ENCODE measurements at regions of chr21 and their contacts with region 1.

Region 1: DNA sequence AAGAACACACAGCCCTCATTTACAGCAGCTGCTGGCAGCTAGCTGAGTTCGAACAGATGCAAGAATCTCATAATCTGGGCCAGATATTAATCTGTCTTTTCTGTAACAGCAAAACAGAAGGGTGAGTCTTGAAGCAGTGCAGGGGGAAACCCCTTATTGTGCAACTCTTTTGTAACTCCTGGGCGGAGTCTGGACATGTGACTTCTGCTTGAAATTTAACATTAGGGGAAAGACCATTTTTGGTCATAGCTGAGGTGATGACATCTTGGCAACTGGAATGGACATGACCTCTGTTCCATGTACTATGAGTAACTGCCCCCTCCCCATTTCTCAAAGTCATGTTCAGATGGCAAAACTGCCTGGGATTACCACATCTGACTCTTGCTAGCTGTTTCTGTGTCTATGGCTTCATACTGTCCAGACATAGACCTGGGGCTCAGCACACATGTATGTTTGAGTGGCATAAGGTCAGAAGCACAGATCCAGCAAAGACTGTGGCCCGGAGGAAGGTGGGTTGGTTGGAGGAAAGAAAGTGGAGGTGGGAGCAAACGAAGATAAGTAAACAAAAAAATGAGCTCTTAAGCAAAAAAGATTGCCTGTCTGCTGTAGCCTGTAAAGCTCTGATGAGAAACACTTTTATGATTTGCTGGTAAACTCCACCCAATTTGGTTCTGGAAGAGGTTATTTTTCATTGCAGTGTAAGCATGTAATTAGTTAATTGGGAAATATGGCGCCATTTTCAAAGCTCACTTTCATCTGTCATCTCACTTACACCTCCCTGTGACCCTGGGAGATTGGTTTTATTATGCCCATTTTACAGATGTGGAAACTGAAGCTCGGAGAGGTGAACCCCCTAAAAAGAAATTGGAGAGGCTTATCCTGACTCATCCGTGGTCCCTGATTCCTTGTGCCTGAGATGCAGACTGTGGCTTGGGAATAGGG is 26.1 kb downstream of the ETS2 start:
- DNase-seq: peak; percentile 98
- H3K4me3 ChIP-seq: no peak overlapping the region
- H3K27ac ChIP-seq: peak overlapping the region; percentile 63
- H3K4me1 ChIP-seq: peaks cover 13% of the 10 kb centered on the region
- H3K27me3 ChIP-seq: no peaks in the 10 kb centered on the region
- CTCF ChIP-seq: no peak

Region 2: DNA sequence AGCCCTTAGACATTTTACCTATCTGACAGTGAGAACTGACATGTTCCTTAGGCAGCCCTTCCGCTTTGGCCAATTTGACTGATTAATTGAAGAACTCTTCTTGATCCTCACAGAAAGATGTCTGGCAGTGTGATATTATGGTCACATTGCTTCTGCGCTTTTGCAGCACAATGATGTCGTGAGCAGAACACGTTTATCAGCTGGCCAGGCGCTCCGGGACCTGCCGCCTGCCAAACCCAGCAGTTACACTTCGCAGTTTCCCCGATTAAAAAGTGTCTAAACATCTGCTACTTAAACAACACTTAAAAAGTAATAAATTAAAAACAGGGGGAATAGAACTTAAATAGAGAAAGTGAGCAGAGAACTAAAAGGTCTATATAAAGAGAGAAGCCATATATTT is 129.6 kb before region 1 on chr21:
- CTCF ChIA-PET with region 1: no interaction called
- dilution Hi-C with region 1: no loop called
- in situ Hi-C with region 1: no loop called
- intact Hi-C with region 1: no loop called
- DNase-seq: no peak
- H3K4me3 ChIP-seq: no peak overlapping the region
- H3K27ac ChIP-seq: no peak overlapping the region
- H3K4me1 ChIP-seq: no peaks in the 10 kb centered on the region
- H3K27me3 ChIP-seq: peaks cover 6% of the 10 kb centered on the region
- CTCF ChIP-seq: no peak

Region 3: GRCh38 chr21:38755681-38756371 is 76.0 kb before region 1 on chr21:
- CTCF ChIA-PET with region 1: no interaction called
- dilution Hi-C with region 1: no loop called
- in situ Hi-C with region 1: no loop called
- intact Hi-C with region 1: no loop called
- DNase-seq: peak; percentile 76
- H3K4me3 ChIP-seq: no peak overlapping the region
- H3K27ac ChIP-seq: peak overlapping the region; percentile 81
- H3K4me1 ChIP-seq: peaks cover 14% of the 10 kb centered on the region
- H3K27me3 ChIP-seq: no peaks in the 10 kb centered on the region
- CTCF ChIP-seq: no peak

Region 4: GRCh38 chr21:38853421-38853919 is 21.7 kb after region 1 on chr21:
- CTCF ChIA-PET with region 1: no interaction called
- dilution Hi-C with region 1: no loop called
- in situ Hi-C with region 1: no loop called
- intact Hi-C with region 1: loop called (anchors 1 kb)
- DNase-seq: peak; percentile 98
- H3K4me3 ChIP-seq: no peak overlapping the region
- H3K27ac ChIP-seq: peak overlapping the region; percentile 45
- H3K4me1 ChIP-seq: peaks cover 28% of the 10 kb centered on the region
- H3K27me3 ChIP-seq: no peaks in the 10 kb centered on the region
- CTCF ChIP-seq: no peak

Region 5: DNA sequence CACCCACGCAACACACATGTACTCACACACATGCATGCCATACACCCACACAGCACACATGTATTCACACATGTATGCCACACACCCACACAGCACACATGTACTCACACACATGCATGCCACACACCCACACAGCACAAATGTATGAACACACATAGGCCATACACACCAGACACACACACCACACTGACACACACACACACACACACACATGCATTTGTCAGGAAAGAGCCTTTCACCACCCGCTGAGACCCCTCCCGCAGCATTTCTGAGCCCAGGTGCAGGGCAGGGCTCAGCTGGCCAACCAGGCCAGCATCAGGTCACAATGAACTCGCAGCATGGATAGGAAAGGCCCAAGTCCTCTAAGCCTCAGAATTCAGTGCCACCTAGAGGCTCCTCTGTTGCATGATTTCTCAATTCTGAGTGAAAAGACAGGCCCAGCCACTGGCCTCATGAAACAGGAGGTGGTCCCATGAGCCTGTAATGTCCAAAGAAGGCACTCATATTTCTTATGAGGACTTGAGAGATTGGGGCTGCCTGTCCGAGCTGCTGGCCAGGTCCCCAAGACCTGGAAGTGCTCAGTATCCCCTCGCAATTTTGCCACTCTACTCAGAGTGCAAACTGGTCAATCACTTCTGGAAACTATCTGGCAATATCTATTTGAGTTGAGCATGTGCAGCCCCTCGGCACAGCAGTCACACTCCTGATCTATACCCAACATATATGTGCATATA is 294.1 kb after region 1 on chr21:
- CTCF ChIA-PET with region 1: no interaction called
- dilution Hi-C with region 1: no loop called
- in situ Hi-C with region 1: no loop called
- intact Hi-C with region 1: loop called (anchors 5 kb)
- DNase-seq: peak; percentile 62
- H3K4me3 ChIP-seq: no peak overlapping the region
- H3K27ac ChIP-seq: no peak overlapping the region
- H3K4me1 ChIP-seq: no peaks in the 10 kb centered on the region
- H3K27me3 ChIP-seq: no peaks in the 10 kb centered on the region
- CTCF ChIP-seq: peak; percentile 54 to 79